Thyroid gland (tissue), 4 donors: ENCODE measurements at regions of chr6 and their contacts with region 1.

Region 1: GRCh38 chr6:39166189-39166911 is 51.4 kb upstream of the SAYSD1 start:
- DNase-seq: peak; percentile 77 to 83
- H3K4me3 ChIP-seq: no peak overlapping the region
- H3K27ac ChIP-seq: no peak overlapping the region
- H3K4me1 ChIP-seq: peaks cover 19 to 27% of the 10 kb centered on the region in 2 donors
- H3K27me3 ChIP-seq: no peaks in the 10 kb centered on the region
- CTCF ChIP-seq: peak; percentile 78 to 94 (median 90)
- POLR2A ChIP-seq: no peak

Region 2: GRCh38 chr6:38871741-38872568 is 294.4 kb before region 1 on chr6:
- intact Hi-C with region 1: loop called (anchors 10 kb)
- DNase-seq: peak; percentile 36 to 55
- H3K4me3 ChIP-seq: no peak overlapping the region
- H3K27ac ChIP-seq: no peak overlapping the region
- H3K4me1 ChIP-seq: no peaks in the 10 kb centered on the region
- H3K27me3 ChIP-seq: no peaks in the 10 kb centered on the region
- CTCF ChIP-seq: peak; percentile 53 to 88 (median 73)
- POLR2A ChIP-seq: no peak

Region 3: DNA sequence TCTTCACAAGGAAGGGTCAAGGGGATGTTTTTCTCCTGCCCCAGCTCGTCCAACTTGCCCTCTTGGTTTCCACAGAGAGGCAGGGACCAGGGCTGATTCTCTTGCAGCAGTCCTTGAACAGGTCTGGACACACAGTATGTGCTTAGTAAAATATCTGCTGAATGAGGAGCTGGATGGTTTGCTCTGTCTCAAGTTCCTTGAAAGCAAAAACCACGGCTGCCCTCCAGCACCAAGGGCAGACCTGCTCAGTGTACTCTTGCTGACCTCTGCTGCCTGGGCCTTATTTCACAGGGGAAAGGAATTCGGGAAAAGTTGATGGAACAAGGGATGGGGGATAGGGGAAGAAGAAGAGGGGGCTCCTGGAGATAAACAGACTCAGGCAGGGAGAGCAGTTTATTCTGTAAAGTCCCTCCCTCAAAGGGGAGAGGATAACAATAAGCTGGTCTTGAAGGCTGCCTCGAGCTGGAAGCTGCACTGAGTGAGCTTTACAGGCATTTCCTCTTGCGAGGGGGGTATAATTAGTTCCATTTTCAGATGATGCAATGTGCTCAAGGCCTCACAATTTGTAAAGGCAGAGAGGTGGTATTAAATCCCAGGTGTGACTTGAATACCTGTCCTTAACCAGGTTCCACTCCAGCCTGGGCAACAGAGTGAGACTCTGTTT is 52.7 kb after region 1 on chr6:
- intact Hi-C with region 1: loop called (anchors 5 kb)
- DNase-seq: no peak
- H3K4me3 ChIP-seq: no peak overlapping the region
- H3K27ac ChIP-seq: peak overlapping the region; percentile 11 to 56 (median 31)
- H3K4me1 ChIP-seq: peaks cover 69 to 95% of the 10 kb centered on the region in 2 donors
- H3K27me3 ChIP-seq: no peaks in the 10 kb centered on the region
- CTCF ChIP-seq: peak in 1 of 6 experiments; percentile 16
- POLR2A ChIP-seq: no peak

Region 4: DNA sequence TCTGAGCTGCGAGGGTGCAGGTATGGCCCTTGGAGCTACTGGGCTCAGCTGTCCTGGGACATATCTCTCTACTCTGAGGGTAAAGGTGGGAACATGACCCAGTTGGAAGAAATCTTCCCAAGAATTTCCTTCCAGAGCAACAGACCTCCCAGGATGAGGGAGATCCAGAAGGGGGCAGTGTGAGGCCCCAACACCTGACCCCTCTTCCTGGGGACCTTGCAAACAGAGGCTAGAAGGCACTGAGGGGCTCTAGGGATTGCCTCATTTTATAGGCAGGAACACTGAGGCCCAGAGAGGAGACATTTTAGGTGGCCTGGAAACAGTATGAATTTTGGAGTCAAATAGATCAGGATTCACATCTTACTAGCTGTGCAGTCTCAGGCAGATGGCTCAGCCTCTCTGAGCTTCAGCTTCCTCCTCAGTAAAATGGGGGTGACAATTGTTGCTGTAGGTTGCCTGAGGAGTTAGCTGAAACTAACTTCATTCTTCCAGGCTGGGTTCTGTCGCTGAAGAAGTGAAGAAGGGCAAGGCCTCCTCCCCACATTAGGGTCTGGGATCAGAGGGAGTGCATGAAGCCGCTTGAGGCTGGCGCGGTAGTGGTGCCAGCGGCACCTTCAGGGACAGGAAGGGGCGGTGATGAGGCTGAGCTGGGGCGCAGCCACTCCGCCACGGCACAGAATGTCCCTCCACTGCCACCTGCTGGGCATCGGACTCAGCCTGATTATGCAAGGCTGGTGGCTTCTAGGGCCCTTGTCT is 136.5 kb after region 1 on chr6:
- intact Hi-C with region 1: loop called (anchors 2 kb)
- DNase-seq: peak; percentile 88 to 91
- H3K4me3 ChIP-seq: no peak overlapping the region
- H3K27ac ChIP-seq: no peak overlapping the region
- H3K4me1 ChIP-seq: peaks cover 0 to 7% of the 10 kb centered on the region in 2 donors
- H3K27me3 ChIP-seq: no peaks in the 10 kb centered on the region
- CTCF ChIP-seq: peak; percentile 73 to 97 (median 92)
- POLR2A ChIP-seq: no peak